Posterior vena cava (tissue), 2 donors: ENCODE measurements at regions of chr5 and their contacts with region 1.

Region 1: GRCh38 chr5:77491783-77492652 is at the start of gene WDR41:
- DNase-seq: peak; percentile 98
- total RNA-seq, gene WDR41: 42.7 to 47.2 TPM

Region 2: GRCh38 chr5:77086689-77087483 is 405.1 kb before region 1 on chr5 and contains the start of gene ZBED3:
- intact Hi-C with region 1: loop called in 1 of 2 experiments (anchors 10 kb)
- DNase-seq: peak; percentile 89
- total RNA-seq, gene ZBED3: 7.8 to 9.7 TPM

Region 3: DNA sequence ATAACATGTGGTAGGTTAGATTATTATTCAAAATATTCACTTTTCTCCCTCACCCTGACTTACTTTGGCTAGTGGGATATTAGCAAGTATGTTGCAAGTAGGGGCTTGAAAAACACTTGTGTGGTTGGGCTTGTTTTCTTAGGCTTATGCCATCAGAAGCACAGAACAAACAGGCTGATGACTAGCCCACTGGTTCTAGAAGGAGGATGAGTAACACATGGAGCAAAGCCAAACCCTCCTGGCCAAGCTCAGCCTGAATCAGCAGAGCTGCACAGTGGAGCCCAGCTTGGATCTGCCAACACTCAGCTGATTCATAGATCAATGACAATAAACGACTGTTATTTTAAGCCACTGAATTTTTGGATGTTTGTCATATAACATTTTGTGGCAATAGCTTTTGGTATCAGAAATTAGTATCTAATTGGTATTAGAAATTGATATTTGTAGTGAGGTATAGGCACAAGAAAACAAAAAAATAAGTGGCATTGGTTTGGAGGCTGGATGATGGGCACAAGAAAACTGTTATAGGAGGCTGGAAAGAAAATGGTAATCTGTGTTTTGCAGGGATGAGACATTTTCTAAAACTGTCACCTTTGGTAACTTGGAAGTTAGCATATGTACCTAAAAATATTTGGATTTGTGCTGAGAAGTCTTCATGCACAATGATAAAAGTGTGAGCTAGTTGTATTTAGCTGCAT is 358.8 kb before region 1 on chr5:
- intact Hi-C with region 1: loop called in 1 of 2 experiments (anchors 10 kb)
- DNase-seq: peak; percentile 90